ENCODE measurements at regions of chr16 and their contacts with region 1.

Region 1: DNA sequence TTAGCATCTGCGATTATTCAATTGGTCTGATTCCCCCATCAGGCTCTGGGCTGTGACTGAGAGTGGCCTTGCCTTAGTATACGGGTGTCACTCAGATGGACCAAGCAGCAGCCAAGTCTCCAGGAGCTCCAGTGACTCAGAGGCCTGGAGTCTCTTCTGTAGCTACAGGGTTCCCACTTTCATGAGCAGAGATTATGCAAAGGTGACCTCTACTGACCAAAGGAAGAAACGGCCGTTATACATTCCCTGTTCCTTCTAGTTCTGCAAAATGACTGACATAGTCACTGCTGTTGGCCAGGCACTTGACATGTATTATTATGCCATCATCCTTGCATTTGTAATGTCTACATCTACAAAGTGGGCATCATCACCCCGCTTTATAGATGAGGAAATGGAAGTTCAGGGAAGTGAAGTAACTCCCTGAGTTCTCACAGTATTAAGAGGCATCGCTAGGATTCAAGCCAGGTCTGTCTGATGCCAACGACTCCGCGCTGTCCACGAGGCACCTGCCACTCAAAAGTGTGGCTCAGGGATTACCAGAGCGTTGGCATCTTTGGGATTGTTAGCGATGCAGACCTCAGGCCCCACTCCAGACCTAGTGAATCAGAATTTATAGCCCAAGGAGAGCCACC is 23.3 kb downstream of the SLC38A7 start:
- DNase-seq: peak; percentile 77 to 79
- H3K4me3 ChIP-seq: no peak overlapping the region
- H3K4me3 Mint-ChIP-seq: no peak overlapping the region
- H3K27ac Mint-ChIP-seq: no peak overlapping the region
- H3K4me1 ChIP-seq: peaks cover 24% of the 10 kb centered on the region
- H3K4me1 Mint-ChIP-seq: peaks cover 11% of the 10 kb centered on the region
- H3K27me3 ChIP-seq: no peaks in the 10 kb centered on the region
- H3K27me3 Mint-ChIP-seq: no peaks in the 10 kb centered on the region
- CTCF ChIP-seq: peak; percentile 63 to 79

Region 2: DNA sequence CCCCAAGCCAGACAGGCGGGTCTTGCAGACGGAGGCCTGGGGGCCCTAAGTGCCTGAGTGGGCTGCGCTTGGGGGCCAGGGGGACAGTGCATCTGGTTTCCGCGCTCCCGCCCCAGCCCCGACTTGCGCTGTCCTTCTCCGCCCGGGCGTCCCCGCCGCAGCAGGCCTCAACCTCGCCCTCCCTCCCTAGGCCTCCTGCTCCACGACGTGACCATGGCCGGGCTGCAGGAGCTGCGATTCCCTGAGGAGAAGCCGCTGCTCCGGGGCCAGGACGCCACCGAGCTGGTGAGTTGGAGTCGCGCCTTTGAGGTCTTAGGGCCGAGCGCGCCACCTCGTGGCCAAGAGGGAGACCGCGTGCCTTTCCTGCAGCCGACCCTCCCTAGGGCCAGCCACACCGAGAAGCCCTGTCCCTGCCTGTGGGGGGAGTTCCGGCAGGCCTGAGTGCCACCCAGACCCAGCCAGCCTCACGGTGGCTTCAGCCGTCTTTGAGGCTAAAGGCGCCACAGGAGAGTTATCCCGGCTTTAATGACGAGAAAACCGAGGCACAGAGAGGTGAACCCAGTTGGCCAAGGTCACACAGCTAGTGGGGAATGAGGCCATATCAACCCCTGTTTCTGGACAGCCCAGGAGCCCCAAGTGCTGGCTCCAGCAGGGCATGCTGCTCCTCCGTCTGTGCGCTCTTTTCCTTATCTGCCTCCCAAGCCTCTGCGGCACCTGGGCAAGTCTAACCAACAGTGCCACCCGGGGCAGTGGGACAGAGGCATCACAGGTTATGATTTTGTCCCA is 173.6 kb before region 1 on chr16:
- CTCF ChIA-PET with region 1: interaction called, 10 read pairs
- POLR2A ChIA-PET with region 1: no interaction called
- intact Hi-C with region 1: no loop called
- DNase-seq: peak; percentile 90 to 92
- H3K4me3 ChIP-seq: no peak overlapping the region
- H3K4me3 Mint-ChIP-seq: no peak overlapping the region
- H3K27ac Mint-ChIP-seq: no peak overlapping the region
- H3K4me1 ChIP-seq: no peaks in the 10 kb centered on the region
- H3K4me1 Mint-ChIP-seq: no peaks in the 10 kb centered on the region
- H3K27me3 ChIP-seq: no peaks in the 10 kb centered on the region
- H3K27me3 Mint-ChIP-seq: peaks cover 4% of the 10 kb centered on the region
- CTCF ChIP-seq: peak; percentile 98 to 99

Region 3: DNA sequence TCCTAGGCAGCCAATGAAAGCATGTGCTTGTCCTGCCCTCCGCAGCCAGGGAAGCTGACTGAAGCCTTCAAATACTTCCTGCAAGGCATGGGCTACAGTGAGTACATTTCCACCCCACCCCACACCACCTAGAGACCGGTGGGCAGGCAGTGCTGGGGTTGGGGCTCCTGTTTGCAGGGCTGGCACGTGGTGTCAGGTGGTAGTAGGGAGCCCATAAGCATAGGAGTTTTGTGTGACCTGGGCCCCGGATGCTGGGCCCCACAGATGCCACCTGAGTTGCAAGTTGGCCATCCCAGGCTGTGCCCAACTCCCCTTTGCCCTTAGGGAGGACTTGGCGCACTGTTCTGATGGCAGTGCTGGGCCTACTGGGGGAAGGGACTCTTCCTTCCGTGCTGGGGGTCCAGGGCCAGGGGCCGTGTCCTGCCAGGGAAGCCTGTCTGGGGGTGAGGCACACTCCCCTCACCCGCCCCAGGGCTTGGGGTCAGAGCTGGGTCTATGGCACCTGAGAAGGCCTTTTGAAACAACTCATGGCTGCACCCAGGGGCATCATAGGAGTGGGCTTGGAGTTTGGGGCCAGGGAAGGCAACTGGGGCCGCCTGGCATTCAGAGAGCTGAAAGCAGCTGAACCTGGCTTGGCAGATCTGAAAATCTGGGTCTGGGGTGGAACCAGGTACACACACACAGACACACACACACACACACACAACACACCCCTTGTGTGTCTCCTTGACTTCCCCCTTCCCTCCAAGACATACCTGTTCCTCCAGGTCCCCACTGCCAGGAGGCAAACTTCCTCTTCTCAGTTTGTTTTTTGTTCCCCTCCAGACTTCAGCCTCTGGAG is 151.8 kb before region 1 on chr16:
- CTCF ChIA-PET with region 1: interaction called, 14 read pairs
- POLR2A ChIA-PET with region 1: no interaction called
- intact Hi-C with region 1: loop called (anchors 1 kb)
- DNase-seq: peak in 1 of 2 experiments; percentile 39
- H3K4me3 ChIP-seq: no peak overlapping the region
- H3K4me3 Mint-ChIP-seq: no peak overlapping the region
- H3K27ac Mint-ChIP-seq: no peak overlapping the region
- H3K4me1 ChIP-seq: peaks cover 11% of the 10 kb centered on the region
- H3K4me1 Mint-ChIP-seq: peaks cover 20% of the 10 kb centered on the region
- H3K27me3 ChIP-seq: no peaks in the 10 kb centered on the region
- H3K27me3 Mint-ChIP-seq: no peaks in the 10 kb centered on the region
- CTCF ChIP-seq: no peak

Region 4: DNA sequence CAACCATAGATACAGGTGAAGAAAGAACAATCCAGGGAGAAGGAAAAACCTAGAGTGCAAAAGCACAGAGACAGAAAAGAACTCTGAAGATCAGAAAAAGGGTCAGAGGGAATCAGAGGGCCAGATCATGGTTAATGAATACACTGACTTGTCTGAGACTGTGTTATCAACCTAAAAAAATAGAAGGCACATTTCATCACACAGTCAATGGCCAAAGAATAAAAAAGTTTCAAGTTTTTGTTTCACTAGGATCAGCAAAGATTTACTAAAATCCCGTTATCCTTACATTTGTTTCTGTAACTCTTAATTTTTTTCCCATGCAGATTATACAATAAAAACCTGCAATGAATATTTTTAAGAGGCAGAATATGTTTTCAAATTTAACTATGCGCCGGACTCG is 70.2 kb before region 1 on chr16:
- CTCF ChIA-PET with region 1: no interaction called
- POLR2A ChIA-PET with region 1: interaction called, 4 read pairs
- intact Hi-C with region 1: loop called (anchors 10 kb)
- DNase-seq: no peak
- H3K4me3 ChIP-seq: no peak overlapping the region
- H3K4me3 Mint-ChIP-seq: no peak overlapping the region
- H3K27ac Mint-ChIP-seq: no peak overlapping the region
- H3K4me1 ChIP-seq: no peaks in the 10 kb centered on the region
- H3K4me1 Mint-ChIP-seq: no peaks in the 10 kb centered on the region
- H3K27me3 ChIP-seq: no peaks in the 10 kb centered on the region
- H3K27me3 Mint-ChIP-seq: no peaks in the 10 kb centered on the region
- CTCF ChIP-seq: no peak

Region 5: DNA sequence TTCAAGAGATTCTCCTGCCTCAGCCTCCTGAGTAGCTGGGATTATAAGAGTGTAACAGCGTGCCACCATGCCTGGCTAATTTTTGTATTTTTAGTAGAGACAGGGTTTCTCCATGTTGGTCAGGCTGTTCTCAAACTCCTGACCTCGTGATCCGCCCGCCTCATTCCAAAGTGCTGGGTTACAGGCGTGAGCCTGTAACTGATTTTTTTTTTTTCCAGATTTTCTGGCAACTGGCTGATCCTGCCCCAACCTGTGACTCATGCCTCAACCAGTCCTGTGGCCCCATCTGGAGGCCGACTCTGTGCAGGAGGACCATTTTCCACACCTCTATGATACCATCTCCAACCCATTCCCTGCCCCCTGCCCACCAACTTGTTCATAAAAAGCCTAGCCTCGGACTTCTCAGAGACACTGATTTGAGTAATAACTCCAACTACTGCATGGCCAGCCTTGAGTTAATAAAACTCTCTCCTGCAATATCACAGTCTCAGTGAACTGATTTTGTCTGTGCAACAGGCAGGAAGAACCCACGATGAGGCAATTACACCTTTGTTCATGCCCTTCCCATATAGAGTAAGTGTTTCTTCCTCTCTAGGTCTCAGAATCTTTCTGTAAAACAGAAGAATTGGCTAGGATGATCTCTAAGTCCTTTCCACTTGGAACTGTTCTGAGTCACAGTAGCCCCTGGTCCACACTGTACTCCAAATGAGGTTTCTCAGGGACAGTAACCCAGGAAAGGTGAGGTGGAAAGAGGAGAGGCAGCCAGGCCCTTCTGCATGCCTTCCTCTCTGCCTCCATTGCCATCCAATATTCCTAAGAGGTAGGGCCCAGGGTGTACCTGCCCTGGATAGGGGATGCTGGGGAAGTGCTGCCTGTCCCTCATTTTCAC is 22.9 kb before region 1 on chr16:
- CTCF ChIA-PET with region 1: interaction called, 12 read pairs
- POLR2A ChIA-PET with region 1: interaction called, 11 read pairs
- intact Hi-C with region 1: loop called (anchors 1 kb)
- DNase-seq: peak; percentile 86 to 87
- H3K4me3 ChIP-seq: no peak overlapping the region
- H3K4me3 Mint-ChIP-seq: peak overlapping the region; percentile 6
- H3K27ac Mint-ChIP-seq: peak overlapping the region; percentile 73
- H3K4me1 ChIP-seq: peaks cover 30% of the 10 kb centered on the region
- H3K4me1 Mint-ChIP-seq: peaks cover 30% of the 10 kb centered on the region
- H3K27me3 ChIP-seq: no peaks in the 10 kb centered on the region
- H3K27me3 Mint-ChIP-seq: no peaks in the 10 kb centered on the region
- CTCF ChIP-seq: peak; percentile 49 to 83

Region 6: DNA sequence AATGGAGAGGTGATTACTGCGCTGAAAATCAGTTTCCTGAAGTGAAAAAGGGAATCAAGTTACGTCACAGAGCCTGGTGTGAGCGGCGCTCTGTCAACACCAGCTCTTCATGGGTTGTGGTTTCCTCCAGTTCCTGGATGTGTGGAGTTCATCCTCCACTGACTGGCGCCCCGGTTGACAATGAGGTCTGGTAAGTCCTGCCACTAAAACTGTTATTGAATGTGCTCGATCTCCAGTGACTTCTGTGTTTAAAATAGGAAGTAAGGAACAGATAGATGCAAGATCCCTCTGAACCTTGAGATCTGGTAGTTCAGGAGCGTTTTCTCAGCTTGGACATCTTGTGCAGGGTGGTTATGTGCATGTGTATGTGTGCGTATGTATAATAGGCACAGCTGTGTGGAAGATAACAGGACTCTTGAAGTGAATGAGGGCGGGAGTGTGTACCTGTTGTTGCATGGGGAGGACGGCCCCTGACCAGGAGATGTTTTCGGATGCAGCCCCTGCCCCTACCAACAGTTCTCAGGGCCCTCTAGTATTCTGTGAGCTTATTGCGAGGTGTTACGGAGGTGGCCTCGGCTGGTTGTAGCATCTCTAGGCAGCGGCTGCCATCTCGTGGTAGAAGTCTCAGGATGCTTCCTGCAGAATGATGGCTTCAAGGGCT is 94.8 kb after region 1 on chr16:
- CTCF ChIA-PET with region 1: interaction called, 24 read pairs
- POLR2A ChIA-PET with region 1: no interaction called
- intact Hi-C with region 1: loop called (anchors 1 kb)
- DNase-seq: peak; percentile 81 to 83
- H3K4me3 ChIP-seq: no peak overlapping the region
- H3K4me3 Mint-ChIP-seq: no peak overlapping the region
- H3K27ac Mint-ChIP-seq: no peak overlapping the region
- H3K4me1 ChIP-seq: no peaks in the 10 kb centered on the region
- H3K4me1 Mint-ChIP-seq: no peaks in the 10 kb centered on the region
- H3K27me3 ChIP-seq: no peaks in the 10 kb centered on the region
- H3K27me3 Mint-ChIP-seq: peaks cover 10% of the 10 kb centered on the region
- CTCF ChIP-seq: peak; percentile 85 to 94